Caki2 (cell line): ENCODE measurements at regions of chr1 and their contacts with region 1.

Region 1: GRCh38 chr1:244445320-244446181 is 6.2 kb downstream of the ADSS2 start:
- DNase-seq: no peak

Region 2: DNA sequence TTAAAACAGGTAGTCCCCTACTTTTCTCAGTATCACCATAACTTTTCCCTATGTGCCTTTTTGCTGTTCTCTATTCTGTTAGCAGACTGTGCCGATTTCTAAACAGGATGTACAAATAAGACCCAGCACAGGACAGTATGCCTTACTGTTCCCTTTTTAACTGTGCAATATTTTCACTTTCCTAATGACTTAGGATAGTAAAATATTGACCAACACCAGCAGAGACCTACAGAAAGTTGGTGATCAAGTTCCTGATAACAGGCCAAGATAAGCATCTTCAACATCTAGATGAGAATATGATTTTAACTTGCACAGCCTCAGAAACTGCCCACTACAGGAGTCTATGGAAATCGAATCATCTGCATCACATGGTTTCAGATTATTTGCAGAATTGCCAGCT is 35.9 kb before region 1 on chr1:
- in situ Hi-C with region 1: loop called (anchors 5 kb)
- DNase-seq: no peak